CD4-positive, alpha-beta memory T cell (primary cell): ENCODE measurements at regions of chr9 and their contacts with region 1.

Region 1: GRCh38 chr9:130042833-130043653 is at the start of gene FNBP1:
- DNase-seq: peak; percentile 82 to 88 (median 84)
- H3K4me3 ChIP-seq: peak within 1 kb of the TSS; percentile 89
- H3K4me3 Mint-ChIP-seq: peak within 1 kb of the TSS; percentile 98 to 100 (median 99)
- H3K27ac ChIP-seq: peak within 1 kb of the TSS; percentile 95
- H3K27ac Mint-ChIP-seq: peak within 1 kb of the TSS; percentile 96 to 99 (median 99)
- H3K4me1 ChIP-seq: peaks cover 41% of the 10 kb centered on the region
- H3K4me1 Mint-ChIP-seq: peaks cover 32 to 69% (median 43%) of the 10 kb centered on the region in 4 donors
- H3K27me3 ChIP-seq: no peaks in the 10 kb centered on the region
- H3K27me3 Mint-ChIP-seq: no peaks in the 10 kb centered on the region
- total RNA-seq, gene FNBP1: 197 to 202 TPM

Region 2: GRCh38 chr9:129586685-129587084 is 456.4 kb before region 1 on chr9:
- CTCF ChIA-PET with region 1: no interaction called
- POLR2A ChIA-PET with region 1: no interaction called
- intact Hi-C with region 1: no loop called
- DNase-seq: peak in 1 of 5 donors; percentile 47
- H3K4me3 ChIP-seq: no peak overlapping the region
- H3K4me3 Mint-ChIP-seq: peak overlapping the region in 4 of 8 donors; percentile 21 to 61 (median 49)
- H3K27ac ChIP-seq: no peak overlapping the region
- H3K27ac Mint-ChIP-seq: peak overlapping the region in 4 of 7 donors; percentile 53 to 87 (median 80)
- H3K4me1 ChIP-seq: peaks cover 30% of the 10 kb centered on the region
- H3K4me1 Mint-ChIP-seq: peaks cover 13 to 55% (median 35%) of the 10 kb centered on the region in 4 donors
- H3K27me3 ChIP-seq: no peaks in the 10 kb centered on the region
- H3K27me3 Mint-ChIP-seq: peaks cover 0 to 1% of the 10 kb centered on the region in 2 donors

Region 3: DNA sequence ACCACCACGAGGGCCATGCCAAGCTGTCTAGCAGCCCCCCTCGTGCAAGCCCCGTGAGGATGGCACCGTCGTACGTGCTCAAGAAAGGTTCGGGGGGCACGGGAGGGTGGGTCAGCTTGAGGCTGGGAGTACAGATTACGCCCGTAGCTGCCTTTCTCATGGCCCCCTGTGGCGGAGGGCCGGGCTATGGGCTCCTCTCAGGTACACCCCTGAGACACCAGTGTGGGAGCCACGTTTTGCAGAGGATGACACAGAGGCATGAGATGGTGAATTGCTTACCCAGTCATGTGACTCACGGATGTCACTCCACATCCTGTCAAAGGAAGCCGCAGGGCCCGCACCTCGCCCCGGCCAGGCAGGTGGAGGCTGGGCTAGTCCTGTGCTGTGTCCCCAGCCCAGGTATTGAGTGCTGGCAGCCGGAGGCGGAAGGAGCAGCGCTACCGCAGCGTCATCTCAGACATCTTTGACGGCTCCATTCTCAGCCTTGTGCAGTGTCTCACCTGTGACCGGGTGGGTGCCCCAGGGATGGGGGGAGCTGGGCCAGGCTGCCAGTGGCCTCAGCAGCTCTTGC is 174.0 kb before region 1 on chr9:
- CTCF ChIA-PET with region 1: interaction called, 3 read pairs
- POLR2A ChIA-PET with region 1: interaction called, 15 read pairs
- intact Hi-C with region 1: no loop called
- DNase-seq: peak; percentile 94 to 98 (median 96)
- H3K4me3 ChIP-seq: peak overlapping the region; percentile 12 to 51
- H3K4me3 Mint-ChIP-seq: peak overlapping the region; percentile 59 to 78 (median 69)
- H3K27ac ChIP-seq: peak overlapping the region; percentile 90
- H3K27ac Mint-ChIP-seq: peak overlapping the region; percentile 86 to 98 (median 94)
- H3K4me1 ChIP-seq: peaks cover 89% of the 10 kb centered on the region
- H3K4me1 Mint-ChIP-seq: peaks cover 46 to 93% (median 73%) of the 10 kb centered on the region in 4 donors
- H3K27me3 ChIP-seq: no peaks in the 10 kb centered on the region
- H3K27me3 Mint-ChIP-seq: no peaks in the 10 kb centered on the region

Region 4: DNA sequence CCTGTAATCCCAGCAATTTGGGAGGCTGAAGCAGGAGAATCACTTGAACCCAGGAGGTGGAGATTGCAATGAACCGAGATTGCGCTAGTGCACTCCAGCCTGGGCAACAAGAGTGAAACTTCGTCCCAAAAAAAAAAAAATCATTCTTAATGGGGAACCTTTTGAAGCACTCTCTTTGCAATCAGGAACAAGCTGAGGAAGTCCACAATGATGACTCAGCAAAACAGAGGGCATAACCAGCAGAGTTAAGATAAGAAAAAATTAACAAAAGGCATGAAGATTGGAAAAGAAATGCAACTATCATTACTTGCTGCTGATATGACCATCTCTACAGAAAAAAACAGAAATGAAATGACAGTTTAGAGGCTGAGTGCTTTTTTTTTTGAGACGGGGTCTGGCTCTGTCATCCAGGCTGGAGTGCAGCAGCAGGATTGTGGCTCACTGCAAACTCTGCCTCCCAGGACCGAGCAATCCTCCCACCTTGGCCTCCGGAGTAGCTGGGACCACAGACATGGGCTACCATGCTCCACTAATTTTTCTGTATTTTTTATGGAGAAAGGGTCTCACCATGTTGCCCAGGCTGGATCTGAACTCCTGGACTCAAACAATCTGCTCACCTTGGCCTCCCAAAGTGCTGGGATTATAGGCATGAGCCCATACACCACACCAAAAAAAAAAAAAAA is 88.0 kb before region 1 on chr9:
- CTCF ChIA-PET with region 1: interaction called, 5 read pairs
- POLR2A ChIA-PET with region 1: interaction called, 125 read pairs
- intact Hi-C with region 1: no loop called
- DNase-seq: no peak
- H3K4me3 ChIP-seq: no peak overlapping the region
- H3K4me3 Mint-ChIP-seq: peak overlapping the region in 7 of 8 donors; percentile 4 to 80 (median 36)
- H3K27ac ChIP-seq: no peak overlapping the region
- H3K27ac Mint-ChIP-seq: peak overlapping the region; percentile 34 to 87 (median 83)
- H3K4me1 ChIP-seq: peaks cover 33% of the 10 kb centered on the region
- H3K4me1 Mint-ChIP-seq: peaks cover 22 to 53% (median 33%) of the 10 kb centered on the region in 4 donors
- H3K27me3 ChIP-seq: no peaks in the 10 kb centered on the region
- H3K27me3 Mint-ChIP-seq: no peaks in the 10 kb centered on the region

Region 5: DNA sequence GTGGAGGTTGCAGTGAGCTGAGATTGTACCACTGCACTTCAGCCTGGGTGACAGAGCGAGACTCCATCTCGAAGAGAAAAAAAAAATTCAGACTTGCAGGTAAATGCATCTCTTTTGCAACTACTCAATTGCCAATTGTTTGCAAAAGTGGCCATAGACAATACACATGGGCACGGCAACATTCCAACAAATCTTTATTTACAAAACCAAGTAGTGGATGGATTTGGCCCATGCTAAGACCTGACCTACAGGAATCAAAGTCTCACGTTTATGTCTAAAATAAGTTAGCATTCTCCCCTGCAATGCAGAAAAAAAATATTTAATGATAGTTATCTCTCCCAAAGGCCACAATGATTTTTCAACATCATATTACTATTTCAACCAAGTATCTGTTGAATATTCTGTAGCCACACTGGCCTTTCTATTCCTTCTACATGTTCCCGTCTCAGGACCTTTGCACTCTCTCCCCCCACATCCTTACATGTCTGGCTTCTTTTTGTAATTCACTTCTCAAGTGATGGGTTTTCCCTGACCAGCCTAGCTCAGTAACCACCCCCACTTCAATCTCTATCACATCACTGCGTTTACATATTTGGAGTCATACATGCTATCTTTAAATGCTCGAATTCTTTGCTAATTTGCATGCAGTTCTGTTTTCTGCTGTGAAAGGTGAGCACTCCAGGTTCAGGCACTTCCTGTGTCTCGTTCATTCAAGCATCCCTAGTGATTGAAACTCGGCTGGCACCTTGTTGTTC is 54.3 kb before region 1 on chr9:
- CTCF ChIA-PET with region 1: interaction called, 8 read pairs
- POLR2A ChIA-PET with region 1: interaction called, 15 read pairs
- intact Hi-C with region 1: no loop called
- DNase-seq: peak in 3 of 5 donors; percentile 26 to 67 (median 33)
- H3K4me3 ChIP-seq: peak overlapping the region in 1 of 2 donors; percentile 36
- H3K4me3 Mint-ChIP-seq: peak overlapping the region in 7 of 8 donors; percentile 23 to 71 (median 44)
- H3K27ac ChIP-seq: peak overlapping the region; percentile 73
- H3K27ac Mint-ChIP-seq: peak overlapping the region; percentile 78 to 94 (median 92)
- H3K4me1 ChIP-seq: peaks cover 75% of the 10 kb centered on the region
- H3K4me1 Mint-ChIP-seq: peaks cover 45 to 83% (median 64%) of the 10 kb centered on the region in 4 donors
- H3K27me3 ChIP-seq: no peaks in the 10 kb centered on the region
- H3K27me3 Mint-ChIP-seq: no peaks in the 10 kb centered on the region

Region 6: DNA sequence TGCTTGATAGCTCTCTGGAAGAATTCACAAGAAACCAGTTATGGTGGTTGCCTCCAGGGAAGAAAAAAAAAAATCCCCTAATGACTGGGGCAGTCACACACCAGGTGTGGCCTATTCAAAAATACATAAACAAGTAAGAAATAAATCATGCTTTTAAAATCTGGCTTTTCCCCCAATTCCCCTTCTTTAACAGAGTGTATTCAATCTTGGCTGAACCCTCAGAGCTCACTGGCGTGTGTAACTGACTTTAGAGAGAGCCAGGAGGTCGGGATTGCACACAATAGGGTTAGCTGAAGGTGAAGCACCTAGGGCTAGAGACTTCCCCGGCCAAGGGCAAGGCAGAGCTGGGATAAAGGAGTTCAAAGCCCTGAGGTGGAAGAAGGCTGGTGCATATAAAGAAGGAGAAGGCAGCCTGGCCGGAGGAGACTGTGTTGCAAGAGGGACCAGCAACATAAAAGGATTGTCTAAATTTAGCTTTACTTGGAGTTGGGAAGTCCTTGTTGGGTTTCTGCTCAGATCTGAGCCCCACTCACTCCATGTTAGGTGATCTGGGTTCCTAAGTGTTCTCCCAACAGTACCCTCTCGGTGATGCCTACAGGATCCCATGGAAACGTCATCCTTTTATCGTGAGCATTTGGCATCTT is 19.8 kb before region 1 on chr9:
- CTCF ChIA-PET with region 1: interaction called, 8 read pairs
- POLR2A ChIA-PET with region 1: interaction called, 83 read pairs
- intact Hi-C with region 1: no loop called
- DNase-seq: no peak
- H3K4me3 ChIP-seq: no peak overlapping the region
- H3K4me3 Mint-ChIP-seq: peak overlapping the region in 7 of 8 donors; percentile 11 to 70 (median 59)
- H3K27ac ChIP-seq: peak overlapping the region; percentile 39
- H3K27ac Mint-ChIP-seq: peak overlapping the region; percentile 73 to 95 (median 87)
- H3K4me1 ChIP-seq: peaks cover 92% of the 10 kb centered on the region
- H3K4me1 Mint-ChIP-seq: peaks cover 67 to 96% (median 79%) of the 10 kb centered on the region in 4 donors
- H3K27me3 ChIP-seq: no peaks in the 10 kb centered on the region
- H3K27me3 Mint-ChIP-seq: no peaks in the 10 kb centered on the region

Region 7: GRCh38 chr9:130101915-130102314 is 58.9 kb after region 1 on chr9:
- CTCF ChIA-PET with region 1: no interaction called
- POLR2A ChIA-PET with region 1: no interaction called
- intact Hi-C with region 1: no loop called
- DNase-seq: no peak
- H3K4me3 ChIP-seq: no peak overlapping the region
- H3K4me3 Mint-ChIP-seq: no peak overlapping the region
- H3K27ac ChIP-seq: no peak overlapping the region
- H3K27ac Mint-ChIP-seq: no peak overlapping the region
- H3K4me1 ChIP-seq: peaks cover 2% of the 10 kb centered on the region
- H3K4me1 Mint-ChIP-seq: peaks cover 4 to 12% (median 7%) of the 10 kb centered on the region in 4 donors
- H3K27me3 ChIP-seq: no peaks in the 10 kb centered on the region
- H3K27me3 Mint-ChIP-seq: no peaks in the 10 kb centered on the region